Thyroid gland (tissue), 4 donors: ENCODE measurements at regions of chr12 and their contacts with region 1.

Region 1: GRCh38 chr12:117874842-117875434 is 93.9 kb downstream of the KSR2 start:
- DNase-seq: peak; percentile 67 to 71
- H3K4me3 ChIP-seq: no peak overlapping the region
- H3K27ac ChIP-seq: no peak overlapping the region
- H3K4me1 ChIP-seq: no peaks in the 10 kb centered on the region
- H3K27me3 ChIP-seq: no peaks in the 10 kb centered on the region
- CTCF ChIP-seq: peak; percentile 80 to 88 (median 86)
- POLR2A ChIP-seq: no peak

Region 2: GRCh38 chr12:118035246-118036041 is 160.5 kb after region 1 on chr12:
- intact Hi-C with region 1: loop called (anchors 10 kb)
- DNase-seq: no peak
- H3K4me3 ChIP-seq: no peak overlapping the region
- H3K27ac ChIP-seq: no peak overlapping the region
- H3K4me1 ChIP-seq: no peaks in the 10 kb centered on the region
- H3K27me3 ChIP-seq: no peaks in the 10 kb centered on the region
- CTCF ChIP-seq: no peak
- POLR2A ChIP-seq: no peak

Region 3: DNA sequence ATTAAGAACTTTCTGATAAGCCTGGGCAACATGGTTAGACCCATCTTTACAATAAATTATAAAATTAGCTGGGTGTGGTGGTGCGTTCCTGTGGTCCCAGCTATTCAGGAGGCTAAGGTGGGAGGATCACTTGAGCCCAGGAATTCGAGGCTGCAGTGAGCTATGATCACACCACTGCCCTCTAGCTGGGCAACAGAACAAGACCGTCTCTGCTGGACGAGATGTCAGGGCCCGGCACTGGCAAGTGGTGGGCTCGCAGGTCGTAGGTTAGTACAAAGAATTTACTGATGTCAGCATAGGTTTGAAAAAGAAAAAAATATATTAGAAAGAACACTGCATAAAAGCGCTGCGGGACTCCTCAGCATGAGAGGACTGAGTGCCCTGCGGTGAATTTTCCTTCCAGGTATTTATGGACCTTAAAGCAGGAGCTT is 244.5 kb after region 1 on chr12:
- intact Hi-C with region 1: loop called (anchors 10 kb)
- DNase-seq: no peak
- H3K4me3 ChIP-seq: no peak overlapping the region
- H3K27ac ChIP-seq: no peak overlapping the region
- H3K4me1 ChIP-seq: peaks cover 10 to 13% of the 10 kb centered on the region in 2 donors
- H3K27me3 ChIP-seq: no peaks in the 10 kb centered on the region
- CTCF ChIP-seq: no peak
- POLR2A ChIP-seq: no peak